ENCODE measurements at regions of chr1 and their contacts with region 1.

Region 1: DNA sequence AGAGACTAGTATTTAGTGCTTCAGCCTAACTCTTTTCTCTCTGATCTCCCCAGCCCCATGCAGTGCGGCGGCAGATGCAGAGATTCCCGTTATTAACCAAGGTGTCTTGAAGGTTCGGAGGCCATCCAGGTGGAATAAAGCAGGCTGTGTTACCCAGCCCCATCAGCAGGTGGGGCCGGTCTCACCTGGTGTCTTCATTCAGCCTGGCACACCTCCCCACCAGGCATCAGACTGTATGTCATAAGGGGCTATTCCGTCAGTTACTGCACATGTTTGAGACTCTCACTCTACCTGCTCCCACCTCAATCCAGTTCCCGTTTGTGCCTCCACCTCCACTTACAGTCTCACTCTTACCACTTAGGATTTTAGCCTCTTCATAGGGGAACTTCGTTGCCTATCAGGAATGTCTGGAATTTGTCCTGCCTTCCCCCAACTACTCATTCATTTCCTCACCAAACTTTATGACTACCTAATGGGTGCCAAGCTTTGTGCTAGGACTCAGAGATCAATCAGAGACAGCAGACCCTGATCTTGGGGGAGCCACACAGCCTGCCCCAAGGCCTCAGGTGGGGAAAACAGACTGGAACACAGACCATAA is 170.2 kb downstream of the PLPP3 start:
- DNase-seq: peak; percentile 36
- H3K27ac ChIP-seq: no peak overlapping the region
- CTCF ChIP-seq: no peak

Region 2: GRCh38 chr1:56363007-56363770 is 46.0 kb before region 1 on chr1:
- CTCF ChIA-PET with region 1: no interaction called
- POLR2A ChIA-PET with region 1: no interaction called
- DNase-seq: no peak
- H3K27ac ChIP-seq: no peak overlapping the region
- CTCF ChIP-seq: no peak

Region 3: GRCh38 chr1:56578963-56579875 is 170.0 kb after region 1 on chr1 and contains the start of gene PLPP3:
- CTCF ChIA-PET with region 1: interaction called, 33 read pairs
- POLR2A ChIA-PET with region 1: no interaction called
- DNase-seq: peak; percentile 89
- H3K27ac ChIP-seq: peak within 1 kb of the TSS; percentile 87
- CTCF ChIP-seq: peak; percentile 60; the same call in 1 of the 2 replicates